BJ (cell line): ENCODE measurements at regions of chr11 and their contacts with region 1.

Region 1: GRCh38 chr11:568306-569157 is 7.7 kb upstream of the PHRF1 start:
- DNase-seq: peak; percentile 65
- H3K4me3 ChIP-seq: peak overlapping the region; percentile 99
- H3K27me3 ChIP-seq: no peaks in the 10 kb centered on the region
- CTCF ChIP-seq: no peak

Region 2: DNA sequence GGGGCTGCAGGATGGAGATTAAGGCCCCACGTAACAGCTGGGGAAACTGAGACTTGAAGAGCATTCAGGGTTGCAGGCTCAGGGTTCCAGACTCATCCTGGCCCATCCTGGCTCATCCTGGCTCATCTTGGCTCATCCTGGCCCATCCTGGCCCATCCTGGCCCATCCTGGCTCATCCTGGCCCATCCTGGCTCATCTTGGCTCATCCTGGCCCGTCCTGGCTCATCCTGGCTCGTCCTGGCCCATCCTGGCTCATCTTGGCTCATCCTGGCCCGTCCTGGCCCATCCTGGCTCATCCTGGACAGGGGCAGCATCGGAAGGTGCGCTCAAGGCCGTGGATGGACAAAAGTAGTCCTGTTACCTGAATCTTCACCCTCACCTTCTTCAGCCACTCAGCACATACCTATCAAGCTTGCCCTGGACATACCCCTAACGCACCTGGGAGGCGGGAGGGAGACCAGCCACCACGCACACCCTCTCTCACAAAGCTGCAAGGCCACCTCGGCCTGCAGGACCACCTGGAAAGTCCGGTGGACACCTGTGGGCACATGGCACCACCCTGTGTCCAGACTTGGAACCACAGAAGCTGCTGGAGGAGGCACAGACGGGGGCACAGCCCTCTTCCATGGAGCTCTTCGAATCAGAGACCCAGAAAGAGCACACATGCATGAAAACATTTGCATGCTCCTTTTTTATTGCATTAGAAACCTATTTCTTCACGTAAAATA is 310.6 kb before region 1 on chr11:
- CTCF ChIA-PET with region 1: no interaction called
- POLR2A ChIA-PET with region 1: interaction called, 16 read pairs
- DNase-seq: no peak
- H3K4me3 ChIP-seq: no peak overlapping the region
- H3K27me3 ChIP-seq: peaks cover 4% of the 10 kb centered on the region
- CTCF ChIP-seq: no peak

Region 3: DNA sequence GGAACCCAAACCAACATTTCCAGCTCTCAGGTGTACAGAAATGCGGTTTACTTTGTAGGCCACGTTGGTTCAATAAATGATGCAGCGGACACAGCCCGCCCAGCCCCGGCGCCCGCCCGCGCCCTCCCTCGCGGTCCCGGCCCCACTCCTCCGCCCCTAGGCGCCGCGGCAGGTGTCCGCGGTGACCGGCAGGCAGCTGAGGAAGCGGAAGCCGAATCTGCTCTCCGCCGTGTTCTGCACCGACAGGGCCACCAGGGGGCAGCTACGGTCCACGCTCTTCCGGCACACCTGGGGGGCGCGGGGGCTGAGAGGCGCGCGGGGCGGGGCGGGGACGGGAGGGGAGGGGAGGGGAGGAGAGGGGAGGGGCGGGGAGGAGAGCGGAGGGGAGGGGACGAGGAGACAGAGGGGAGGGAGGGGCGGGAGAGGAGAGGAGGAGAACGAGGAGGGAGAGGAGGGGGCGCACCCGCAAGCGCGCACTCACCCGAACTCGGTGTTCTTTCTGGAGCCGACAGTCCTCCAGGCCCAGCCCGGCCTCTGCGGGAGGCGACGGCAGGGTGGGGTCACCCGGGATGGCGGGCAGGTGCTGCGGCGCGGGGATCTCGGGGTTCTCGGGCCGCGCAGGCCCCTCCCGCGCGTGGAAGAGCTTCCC is 13.6 kb before region 1 on chr11:
- CTCF ChIA-PET with region 1: interaction called, 13 read pairs
- POLR2A ChIA-PET with region 1: no interaction called
- DNase-seq: no peak
- H3K4me3 ChIP-seq: peak overlapping the region; percentile 3; the same call in 1 of the 2 replicates
- H3K27me3 ChIP-seq: peaks cover 15% of the 10 kb centered on the region
- CTCF ChIP-seq: peak; percentile 57